Activated T-helper 2 cell treated with anti-CD3 and anti-CD28 coated beads, Interferon-gamma antibody, Interleukin-2, Interleukin-4, amounts not matched to agents 10 μg/mL and 5 μg/mL and 100 μg/mL, durations not matched to agents 14 hours and 24 hours and 36 hours (primary cell): ENCODE measurements at regions of chr14 and their contacts with region 1.

Region 1: DNA sequence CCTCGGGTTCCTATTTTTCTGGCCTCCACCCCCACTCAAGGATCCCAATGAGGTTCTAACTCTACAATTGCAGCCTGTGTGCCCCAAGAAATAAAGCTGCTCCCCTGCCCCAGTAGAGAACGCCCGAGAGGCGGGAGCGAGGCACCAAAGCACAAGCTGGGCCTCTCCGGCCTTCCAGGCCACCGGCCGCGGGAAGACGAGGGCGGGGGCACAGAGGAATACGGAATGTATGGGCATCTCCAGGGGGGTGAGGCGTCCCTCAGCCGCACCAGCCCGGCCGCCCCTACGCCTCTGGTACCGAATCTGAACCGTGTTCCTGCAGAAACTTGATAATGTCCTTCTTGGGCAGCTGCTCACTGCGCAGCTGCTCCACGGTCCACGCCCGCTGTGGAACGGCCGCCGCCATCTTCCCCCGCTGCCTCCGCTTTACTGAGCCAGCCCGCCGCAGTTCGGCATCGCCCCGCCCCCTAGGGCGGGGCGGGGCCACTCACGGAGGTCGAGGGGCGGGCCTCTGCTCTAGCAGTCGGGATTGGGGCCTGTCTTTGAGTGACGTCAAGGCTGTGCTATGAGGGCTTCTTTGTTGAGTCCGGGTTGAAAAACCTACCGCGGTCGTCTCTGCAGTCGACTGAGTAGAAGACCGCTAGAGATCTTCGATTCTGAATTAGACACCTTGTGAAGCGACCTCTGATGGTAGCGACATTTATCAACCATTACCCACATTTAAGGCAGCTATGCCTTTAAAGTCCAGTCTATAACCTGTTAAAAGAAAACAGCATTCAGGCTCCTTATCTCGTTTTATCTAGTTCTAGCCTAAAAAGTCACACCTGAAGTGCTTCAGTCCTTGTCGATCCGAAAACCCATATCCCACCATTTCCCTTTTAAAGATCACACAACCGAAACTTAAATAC is at the start of gene FKBP3:
- DNase-seq: peak; percentile 93
- H3K4me3 Mint-ChIP-seq: peak within 1 kb of the TSS; percentile 92
- H3K27ac Mint-ChIP-seq: peak within 1 kb of the TSS; percentile 98
- H3K4me1 Mint-ChIP-seq: peaks cover 30% of the 10 kb centered on the region
- H3K27me3 Mint-ChIP-seq: no peaks in the 10 kb centered on the region
- total RNA-seq, gene FKBP3: 78.7 and 79.1 TPM in 2 replicates

Region 2: DNA sequence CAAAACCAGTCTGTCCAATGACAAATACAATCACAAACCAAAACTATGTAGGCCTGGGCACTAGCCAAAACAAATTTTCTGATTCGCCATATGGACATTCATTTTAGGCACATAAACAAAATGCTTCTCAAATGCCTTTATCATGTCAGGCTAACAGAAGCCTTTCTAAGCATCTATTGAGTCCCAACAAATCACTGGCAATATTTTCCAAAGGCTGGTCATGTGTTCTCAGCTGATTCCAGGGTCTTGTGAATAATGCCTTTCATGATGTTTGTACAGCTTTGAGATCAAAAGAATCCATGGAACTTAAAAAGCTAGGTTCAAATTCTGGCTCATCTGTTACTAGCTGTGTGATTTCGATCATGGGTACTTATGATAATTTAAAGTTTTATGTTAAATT is 643.3 kb before region 1 on chr14:
- intact Hi-C with region 1: no loop called
- DNase-seq: no peak
- H3K4me3 Mint-ChIP-seq: no peak overlapping the region
- H3K27ac Mint-ChIP-seq: no peak overlapping the region
- H3K4me1 Mint-ChIP-seq: no peaks in the 10 kb centered on the region
- H3K27me3 Mint-ChIP-seq: no peaks in the 10 kb centered on the region

Region 3: DNA sequence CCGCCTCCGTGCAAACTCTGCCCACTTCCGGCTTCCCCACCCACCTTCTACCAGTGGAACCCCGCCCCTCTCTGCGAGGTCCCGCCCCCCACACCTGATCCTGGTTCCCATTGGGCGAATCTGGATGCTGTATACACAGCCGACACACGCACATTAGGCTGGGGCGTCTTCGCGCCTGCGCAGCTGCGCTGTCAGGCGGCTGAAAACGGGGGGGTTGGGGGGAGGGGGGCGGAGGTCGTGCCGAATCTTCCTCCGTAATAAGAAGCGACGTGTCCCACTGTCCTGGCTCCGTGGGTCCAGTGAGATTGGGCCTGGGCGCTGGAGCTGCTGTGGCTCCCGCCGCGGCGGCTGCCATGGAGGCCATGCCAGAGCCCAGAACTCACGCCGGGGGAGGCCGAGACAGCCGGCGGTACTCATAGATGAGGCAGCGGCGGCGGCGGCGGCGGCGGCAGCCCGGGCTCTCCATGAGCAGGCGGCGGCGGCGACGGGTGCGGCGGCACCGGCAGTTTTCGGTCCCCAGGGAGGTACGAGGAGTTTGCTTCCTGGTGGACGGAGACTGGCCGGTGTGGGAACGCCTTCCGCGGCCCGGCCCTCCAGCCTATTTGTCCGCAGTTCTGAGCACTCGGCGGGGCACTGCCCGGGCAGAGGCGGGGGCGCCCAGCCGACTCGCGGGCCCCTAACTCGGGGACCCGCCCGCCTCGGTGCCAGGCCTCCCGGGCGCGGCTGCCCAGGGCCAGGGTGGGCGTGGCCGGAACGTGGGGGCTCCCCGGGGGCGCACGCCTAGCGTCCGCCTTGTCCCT is 237.1 kb before region 1 on chr14:
- intact Hi-C with region 1: loop called (anchors 1 kb)
- DNase-seq: peak; percentile 86
- H3K4me3 Mint-ChIP-seq: peak overlapping the region; percentile 92
- H3K27ac Mint-ChIP-seq: peak overlapping the region; percentile 92
- H3K4me1 Mint-ChIP-seq: peaks cover 13% of the 10 kb centered on the region
- H3K27me3 Mint-ChIP-seq: no peaks in the 10 kb centered on the region

Region 4: GRCh38 chr14:45083971-45084722 is 50.2 kb before region 1 on chr14 and contains the start of gene PRPF39:
- intact Hi-C with region 1: loop called (anchors 1 kb)
- DNase-seq: peak; percentile 94
- H3K4me3 Mint-ChIP-seq: peak within 1 kb of the TSS; percentile 97
- H3K27ac Mint-ChIP-seq: peak within 1 kb of the TSS; percentile 97
- H3K4me1 Mint-ChIP-seq: peaks cover 46% of the 10 kb centered on the region
- H3K27me3 Mint-ChIP-seq: no peaks in the 10 kb centered on the region
- total RNA-seq, gene PRPF39: 47.6 and 47.8 TPM in 2 replicates

Region 5: GRCh38 chr14:45114327-45114726 is 20.0 kb before region 1 on chr14:
- intact Hi-C with region 1: loop called (anchors 1 kb)
- DNase-seq: no peak
- H3K4me3 Mint-ChIP-seq: no peak overlapping the region
- H3K27ac Mint-ChIP-seq: peak overlapping the region; percentile 62
- H3K4me1 Mint-ChIP-seq: peaks cover 21% of the 10 kb centered on the region
- H3K27me3 Mint-ChIP-seq: no peaks in the 10 kb centered on the region

Region 6: GRCh38 chr14:45253068-45253753 is 118.9 kb after region 1 on chr14 and contains the start of gene MIS18BP1:
- intact Hi-C with region 1: loop called (anchors 1 kb)
- DNase-seq: peak; percentile 94
- H3K4me3 Mint-ChIP-seq: peak within 1 kb of the TSS; percentile 91
- H3K27ac Mint-ChIP-seq: peak within 1 kb of the TSS; percentile 98
- H3K4me1 Mint-ChIP-seq: peaks cover 21% of the 10 kb centered on the region
- H3K27me3 Mint-ChIP-seq: no peaks in the 10 kb centered on the region
- total RNA-seq, gene MIS18BP1: 56.4 and 62.9 TPM in 2 replicates